CD4-positive, alpha-beta memory T cell (primary cell): ENCODE measurements at regions of chr6 and their contacts with region 1.

Region 1: GRCh38 chr6:26568601-26569432 is 27.9 kb upstream of the ABT1 start:
- DNase-seq: peak; percentile 96 to 98 (median 97)
- H3K4me3 ChIP-seq: peak overlapping the region; percentile 74 to 82
- H3K4me3 Mint-ChIP-seq: peak overlapping the region; percentile 94 to 99 (median 96)
- H3K27ac ChIP-seq: peak overlapping the region; percentile 62
- H3K27ac Mint-ChIP-seq: peak overlapping the region; percentile 92 to 100 (median 98)
- H3K4me1 ChIP-seq: peaks cover 9% of the 10 kb centered on the region
- H3K4me1 Mint-ChIP-seq: peaks cover 17 to 34% (median 23%) of the 10 kb centered on the region in 4 donors
- H3K27me3 ChIP-seq: no peaks in the 10 kb centered on the region
- H3K27me3 Mint-ChIP-seq: peaks cover 0 to 10% of the 10 kb centered on the region in 2 donors

Region 2: DNA sequence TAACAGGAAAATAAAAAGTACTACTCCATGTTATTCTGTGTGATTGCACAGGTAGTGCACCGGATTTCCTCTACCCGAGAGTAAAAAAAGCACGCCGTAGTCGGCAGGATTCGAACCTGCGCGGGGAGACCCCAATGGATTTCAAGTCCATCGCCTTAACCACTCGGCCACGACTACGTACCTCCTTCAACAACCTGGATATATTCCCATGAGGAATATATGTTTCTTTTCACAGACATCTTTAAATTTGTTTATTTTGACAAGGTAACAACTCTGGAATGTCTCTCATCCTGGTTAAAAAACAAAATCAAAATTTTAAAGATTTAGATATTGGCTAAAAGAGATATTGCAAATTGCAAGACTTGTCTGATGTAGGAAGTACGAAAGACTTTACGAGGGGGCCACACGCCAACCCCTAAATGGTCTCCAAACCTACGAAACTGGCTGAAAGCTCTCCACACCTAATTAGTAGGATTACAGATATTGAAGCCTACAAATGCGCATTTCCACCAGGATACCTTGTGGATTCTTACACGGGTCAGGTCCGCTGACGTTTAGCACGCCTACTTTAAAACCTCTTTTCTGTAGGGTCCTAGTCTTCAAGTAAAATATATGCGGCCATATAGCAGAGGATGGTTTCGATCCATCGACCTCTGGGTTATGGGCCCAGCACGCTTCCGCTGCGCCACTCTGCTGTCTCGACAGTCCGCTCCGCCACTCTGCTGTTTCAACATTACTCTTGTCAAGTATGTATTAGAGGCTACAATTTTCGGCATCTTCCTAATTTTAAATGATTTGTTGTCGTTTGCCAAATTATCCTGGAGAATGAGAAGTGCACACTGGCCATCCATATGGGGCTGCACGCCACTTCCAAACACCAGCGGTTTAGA is 256.1 kb before region 1 on chr6:
- CTCF ChIA-PET with region 1: no interaction called
- POLR2A ChIA-PET with region 1: interaction called, 6 read pairs
- intact Hi-C with region 1: loop called (anchors 1 kb)
- DNase-seq: peak; percentile 84 to 88 (median 85)
- H3K4me3 ChIP-seq: peak overlapping the region; percentile 31 to 73
- H3K4me3 Mint-ChIP-seq: peak overlapping the region; percentile 81 to 95 (median 92)
- H3K27ac ChIP-seq: peak overlapping the region; percentile 56
- H3K27ac Mint-ChIP-seq: peak overlapping the region; percentile 92 to 99 (median 96)
- H3K4me1 ChIP-seq: peaks cover 29% of the 10 kb centered on the region
- H3K4me1 Mint-ChIP-seq: peaks cover 29 to 54% (median 39%) of the 10 kb centered on the region in 4 donors
- H3K27me3 ChIP-seq: no peaks in the 10 kb centered on the region
- H3K27me3 Mint-ChIP-seq: peaks cover 0 to 8% of the 10 kb centered on the region in 2 donors

Region 3: DNA sequence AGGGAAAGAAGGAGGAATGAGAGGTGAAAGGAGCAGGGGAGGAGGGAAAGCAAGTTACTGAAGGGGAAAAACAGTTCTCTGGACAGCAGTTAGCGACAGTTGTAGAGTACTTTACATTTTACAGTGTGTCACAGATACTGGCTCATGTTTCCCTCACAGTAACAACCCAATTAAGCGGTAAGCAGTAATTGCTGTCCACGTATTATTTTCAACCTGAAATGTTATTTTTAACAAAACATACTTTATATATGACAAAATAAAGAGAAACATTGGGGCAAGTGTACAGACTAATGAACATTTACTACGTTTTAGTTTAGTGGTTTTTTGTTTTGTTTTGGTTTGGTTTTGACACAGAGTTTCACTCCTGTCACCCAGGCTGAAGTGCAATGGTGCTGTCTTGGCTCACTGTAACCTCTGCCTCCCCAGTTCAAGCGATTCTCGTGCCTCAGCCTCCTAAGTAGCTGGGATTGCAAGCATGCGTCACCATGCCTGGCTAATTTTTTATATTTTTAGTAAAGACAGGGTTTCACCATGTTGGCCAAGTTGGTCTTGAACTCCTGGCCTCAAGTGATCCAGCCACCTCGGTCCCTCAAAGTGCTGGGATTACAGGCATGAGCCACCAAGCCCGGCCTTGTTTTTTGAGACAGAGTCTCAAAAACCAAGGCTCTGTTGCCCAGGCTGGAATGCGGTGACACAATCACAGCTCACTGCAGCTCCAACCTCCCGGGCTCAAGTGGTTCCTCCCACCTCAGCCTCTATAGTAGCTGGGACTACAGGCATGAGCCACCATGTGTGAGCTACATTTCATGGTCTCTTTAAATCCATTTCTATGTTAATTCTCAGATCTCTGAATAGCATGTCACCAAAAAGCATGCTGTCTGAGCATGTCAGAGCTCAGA is 226.5 kb before region 1 on chr6:
- CTCF ChIA-PET with region 1: interaction called, 72 read pairs
- POLR2A ChIA-PET with region 1: interaction called, 30 read pairs
- intact Hi-C with region 1: loop called (anchors 1 kb)
- DNase-seq: no peak
- H3K4me3 ChIP-seq: peak overlapping the region; percentile 39 to 40
- H3K4me3 Mint-ChIP-seq: peak overlapping the region; percentile 68 to 86 (median 86)
- H3K27ac ChIP-seq: no peak overlapping the region
- H3K27ac Mint-ChIP-seq: peak overlapping the region in 5 of 7 donors; percentile 42 to 91 (median 52)
- H3K4me1 ChIP-seq: peaks cover 11% of the 10 kb centered on the region
- H3K4me1 Mint-ChIP-seq: peaks cover 6 to 8% (median 7%) of the 10 kb centered on the region in 4 donors
- H3K27me3 ChIP-seq: no peaks in the 10 kb centered on the region
- H3K27me3 Mint-ChIP-seq: no peaks in the 10 kb centered on the region

Region 4: GRCh38 chr6:26520853-26521599 is 47.8 kb before region 1 on chr6:
- CTCF ChIA-PET with region 1: interaction called, 8 read pairs
- POLR2A ChIA-PET with region 1: no interaction called
- intact Hi-C with region 1: loop called (anchors 1 kb)
- DNase-seq: peak; percentile 87 to 89 (median 88)
- H3K4me3 ChIP-seq: peak overlapping the region; percentile 64 to 69
- H3K4me3 Mint-ChIP-seq: peak overlapping the region; percentile 80 to 97 (median 92)
- H3K27ac ChIP-seq: peak overlapping the region; percentile 64
- H3K27ac Mint-ChIP-seq: peak overlapping the region; percentile 82 to 99 (median 96)
- H3K4me1 ChIP-seq: peaks cover 8% of the 10 kb centered on the region
- H3K4me1 Mint-ChIP-seq: peaks cover 27 to 44% (median 30%) of the 10 kb centered on the region in 4 donors
- H3K27me3 ChIP-seq: no peaks in the 10 kb centered on the region
- H3K27me3 Mint-ChIP-seq: peaks cover 1 to 2% of the 10 kb centered on the region in 2 donors

Region 5: GRCh38 chr6:26553635-26554446 is 15.0 kb before region 1 on chr6:
- CTCF ChIA-PET with region 1: interaction called, 41 read pairs
- POLR2A ChIA-PET with region 1: interaction called, 92 read pairs
- intact Hi-C with region 1: loop called (anchors 1 kb)
- DNase-seq: peak; percentile 83 to 88 (median 86)
- H3K4me3 ChIP-seq: peak overlapping the region; percentile 67 to 93
- H3K4me3 Mint-ChIP-seq: no peak overlapping the region
- H3K27ac ChIP-seq: peak overlapping the region; percentile 31
- H3K27ac Mint-ChIP-seq: no peak overlapping the region
- H3K4me1 ChIP-seq: peaks cover 31% of the 10 kb centered on the region
- H3K4me1 Mint-ChIP-seq: peaks cover 11 to 28% (median 19%) of the 10 kb centered on the region in 4 donors
- H3K27me3 ChIP-seq: no peaks in the 10 kb centered on the region
- H3K27me3 Mint-ChIP-seq: peaks cover 0 to 2% of the 10 kb centered on the region in 2 donors

Region 6: GRCh38 chr6:27078734-27079357 is 510.0 kb after region 1 on chr6:
- CTCF ChIA-PET with region 1: interaction called, 7 read pairs
- POLR2A ChIA-PET with region 1: no interaction called
- intact Hi-C with region 1: loop called (anchors 1 kb)
- DNase-seq: peak; percentile 36 to 52 (median 46)
- H3K4me3 ChIP-seq: no peak overlapping the region
- H3K4me3 Mint-ChIP-seq: peak overlapping the region; percentile 35 to 82 (median 76)
- H3K27ac ChIP-seq: no peak overlapping the region
- H3K27ac Mint-ChIP-seq: no peak overlapping the region
- H3K4me1 ChIP-seq: peaks cover 5% of the 10 kb centered on the region
- H3K4me1 Mint-ChIP-seq: peaks cover 0 to 7% (median 5%) of the 10 kb centered on the region in 4 donors
- H3K27me3 ChIP-seq: peaks cover 10% of the 10 kb centered on the region
- H3K27me3 Mint-ChIP-seq: peaks cover 21 to 35% of the 10 kb centered on the region in 2 donors